ENCODE measurements at regions of chr12 and their contacts with region 1.

Region 1: DNA sequence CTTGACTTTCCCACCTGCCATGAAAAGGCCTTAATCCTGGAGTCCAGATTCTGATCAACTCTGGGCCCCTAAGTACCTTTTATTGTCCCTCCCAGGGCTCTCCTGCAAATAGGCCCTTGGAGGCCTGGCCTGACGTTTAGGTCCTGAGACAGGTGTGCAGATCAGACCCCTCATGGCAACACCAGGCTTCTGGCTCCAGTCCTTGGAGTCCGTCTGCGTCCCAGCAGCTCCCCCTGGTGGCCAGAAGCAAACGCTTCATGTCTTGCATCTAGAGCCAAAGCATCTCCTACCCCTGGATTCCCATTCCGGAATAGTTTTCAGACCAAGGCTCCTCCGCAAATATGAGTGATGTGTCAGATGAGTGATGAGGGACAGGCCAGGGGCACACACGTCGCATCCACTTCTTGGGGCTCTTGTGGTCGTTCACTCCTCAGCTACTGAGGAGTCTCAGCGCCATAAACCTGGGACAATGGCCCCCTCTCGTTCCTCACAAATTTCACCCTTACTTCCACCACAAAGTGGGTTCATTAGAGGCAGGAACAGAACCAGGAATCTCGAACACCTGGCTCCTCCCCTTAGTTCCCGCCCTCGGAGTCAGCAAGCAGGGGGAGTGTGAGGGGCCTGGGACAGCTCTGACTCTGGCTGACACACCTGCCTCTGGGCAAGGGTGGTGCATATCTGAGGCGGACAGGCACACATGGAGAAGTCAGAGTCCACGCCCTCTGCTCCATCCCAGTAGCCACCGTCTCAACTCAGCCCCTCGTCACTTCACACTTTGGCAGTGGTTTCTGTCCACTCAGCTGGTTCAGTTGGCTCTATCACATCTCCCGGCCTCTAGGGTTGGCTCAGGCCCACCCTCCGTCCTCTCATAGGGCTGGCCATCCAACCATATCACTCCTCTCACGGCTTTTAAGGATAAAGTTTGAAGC is 77.9 kb upstream of the PWP1 start:
- DNase-seq: peak; percentile 86 to 90 (median 88)
- H3K4me3 ChIP-seq: no peak overlapping the region
- H3K27ac ChIP-seq: no peak overlapping the region
- H3K4me1 ChIP-seq: no peaks in the 10 kb centered on the region
- H3K27me3 ChIP-seq: no peaks in the 10 kb centered on the region
- CTCF ChIP-seq: peak; percentile 95

Region 2: GRCh38 chr12:107131832-107132616 is 475.7 kb before region 1 on chr12:
- intact Hi-C with region 1: loop called (anchors 5 kb)
- DNase-seq: peak in 4 of 5 donors; percentile 38 to 81 (median 56)
- H3K4me3 ChIP-seq: no peak overlapping the region
- H3K27ac ChIP-seq: no peak overlapping the region
- H3K4me1 ChIP-seq: no peaks in the 10 kb centered on the region
- H3K27me3 ChIP-seq: no peaks in the 10 kb centered on the region
- CTCF ChIP-seq: peak; percentile 86

Measured in kidney (tissue), 22 donors.